Naive thymus-derived CD4-positive, alpha-beta T cell (primary cell): ENCODE measurements at regions of chr17 and their contacts with region 1.

Region 1: GRCh38 chr17:2416010-2416734 is 15.3 kb upstream of the MNT start:
- DNase-seq: peak; percentile 70 to 87 (median 78)
- ATAC-seq: peak; percentile 90
- H3K4me3 ChIP-seq: no peak overlapping the region
- H3K4me3 Mint-ChIP-seq: no peak overlapping the region
- H3K27ac ChIP-seq: no peak overlapping the region
- H3K27ac Mint-ChIP-seq: peak overlapping the region in 7 of 9 donors; percentile 31 to 80 (median 58)
- H3K4me1 ChIP-seq: no peaks in the 10 kb centered on the region
- H3K4me1 Mint-ChIP-seq: peaks cover 0 to 4% (median 0%) of the 10 kb centered on the region in 7 donors
- H3K27me3 ChIP-seq: no peaks in the 10 kb centered on the region
- H3K27me3 Mint-ChIP-seq: no peaks in the 10 kb centered on the region

Region 2: GRCh38 chr17:2303204-2304188 is 112.7 kb before region 1 on chr17 and contains the starts of genes SMG6 and SRR:
- CTCF ChIA-PET with region 1: interaction called, 3 read pairs
- POLR2A ChIA-PET with region 1: no interaction called
- intact Hi-C with region 1: loop called in 1 of 2 experiments (anchors 5 kb)
- DNase-seq: peak; percentile 87 to 95 (median 93)
- ATAC-seq: peak; percentile 97
- H3K4me3 ChIP-seq: peak within 1 kb of the TSS; percentile 87
- H3K4me3 Mint-ChIP-seq: peak within 1 kb of the TSS; percentile 90 to 98 (median 92)
- H3K27ac ChIP-seq: peak within 1 kb of the TSS; percentile 98
- H3K27ac Mint-ChIP-seq: peak within 1 kb of the TSS; percentile 76 to 95 (median 84)
- H3K4me1 ChIP-seq: peaks cover 9 to 13% of the 10 kb centered on the region in 2 donors
- H3K4me1 Mint-ChIP-seq: peaks cover 25 to 61% (median 47%) of the 10 kb centered on the region in 7 donors
- H3K27me3 ChIP-seq: no peaks in the 10 kb centered on the region
- H3K27me3 Mint-ChIP-seq: no peaks in the 10 kb centered on the region
- total RNA-seq, gene SMG6: 45.6 to 65.3 (median 55.8) TPM
- total RNA-seq, gene SRR: 3.1 to 16.0 (median 8.3) TPM

Region 3: DNA sequence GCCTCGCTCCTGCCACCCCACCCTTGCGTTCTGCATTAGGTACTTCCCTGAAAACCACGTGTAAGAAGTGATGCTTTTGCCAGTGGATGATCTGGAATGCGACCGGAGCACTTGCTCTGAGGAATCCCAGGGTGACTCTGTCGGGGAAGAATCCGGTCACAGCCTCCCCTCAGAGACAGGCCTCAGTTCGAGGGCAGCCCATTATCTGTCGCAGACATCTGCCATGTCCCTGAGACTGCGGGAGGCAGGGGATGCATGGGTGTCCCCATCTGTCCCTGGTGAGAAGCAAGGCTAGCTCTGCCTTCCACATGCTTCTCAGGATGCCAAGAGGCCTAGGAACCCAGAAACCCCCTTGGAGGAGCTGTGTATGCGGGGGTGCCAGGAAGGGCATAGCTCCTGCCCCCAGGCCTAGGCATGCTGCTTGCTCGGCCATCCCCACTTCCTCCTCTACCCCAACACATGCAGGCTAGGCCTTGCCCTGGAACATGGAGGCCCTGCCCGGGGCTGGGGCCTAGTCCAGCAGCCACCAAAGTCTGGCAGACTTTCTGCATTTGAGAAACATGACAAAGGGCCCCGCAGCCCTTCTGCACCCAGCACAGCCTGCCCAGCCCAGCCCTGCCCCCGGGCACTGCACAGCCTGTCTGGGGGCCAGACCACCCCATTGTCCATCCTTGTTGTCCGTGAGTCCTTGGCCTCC is 35.8 kb before region 1 on chr17:
- CTCF ChIA-PET with region 1: interaction called, 256 read pairs
- POLR2A ChIA-PET with region 1: interaction called, 50 read pairs
- intact Hi-C with region 1: loop called (anchors 1 kb)
- DNase-seq: no peak
- ATAC-seq: no peak
- H3K4me3 ChIP-seq: no peak overlapping the region
- H3K4me3 Mint-ChIP-seq: no peak overlapping the region
- H3K27ac ChIP-seq: no peak overlapping the region
- H3K27ac Mint-ChIP-seq: peak overlapping the region in 2 of 9 donors; percentile 17 to 43
- H3K4me1 ChIP-seq: peaks cover 0 to 5% of the 10 kb centered on the region in 2 donors
- H3K4me1 Mint-ChIP-seq: peaks cover 0 to 5% (median 0%) of the 10 kb centered on the region in 7 donors
- H3K27me3 ChIP-seq: no peaks in the 10 kb centered on the region
- H3K27me3 Mint-ChIP-seq: no peaks in the 10 kb centered on the region

Region 4: DNA sequence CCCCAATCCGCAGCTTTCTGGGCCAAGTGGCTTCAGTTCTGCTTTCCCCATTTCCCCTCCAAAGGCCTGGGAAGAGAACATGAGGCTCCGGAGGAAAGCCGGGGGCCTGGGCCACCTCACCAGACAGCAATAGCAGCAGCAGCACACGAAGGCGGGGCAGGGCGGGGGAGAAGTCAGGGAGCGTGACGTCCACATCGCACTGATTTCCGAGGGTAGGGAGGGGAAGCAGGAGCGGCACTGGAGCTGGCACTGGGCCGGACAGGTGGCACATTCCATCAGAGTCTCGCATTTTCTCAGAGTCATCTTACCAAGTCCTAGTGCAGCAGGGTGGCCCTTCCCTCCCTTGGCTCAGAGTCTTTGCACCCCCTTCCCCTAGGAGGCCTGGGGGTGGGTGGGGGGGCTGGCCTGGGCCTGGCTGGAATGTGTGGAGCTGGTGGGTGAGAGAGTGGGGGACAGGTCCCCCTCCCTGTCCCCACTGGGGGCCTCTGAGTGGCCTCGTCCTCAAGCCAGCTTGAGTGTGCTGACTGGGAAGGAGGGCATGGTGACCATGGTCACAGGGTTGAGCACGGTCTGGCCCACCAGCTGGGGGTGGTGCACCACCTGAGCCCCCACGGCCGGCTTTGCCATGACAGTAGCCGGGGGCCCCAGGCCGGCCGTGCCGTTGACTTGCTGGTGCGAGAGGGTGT is 29.6 kb before region 1 on chr17:
- CTCF ChIA-PET with region 1: interaction called, 256 read pairs
- POLR2A ChIA-PET with region 1: interaction called, 50 read pairs
- intact Hi-C with region 1: loop called (anchors 1 kb)
- DNase-seq: peak in 1 of 9 donors; percentile 8
- ATAC-seq: no peak
- H3K4me3 ChIP-seq: no peak overlapping the region
- H3K4me3 Mint-ChIP-seq: no peak overlapping the region
- H3K27ac ChIP-seq: no peak overlapping the region
- H3K27ac Mint-ChIP-seq: peak overlapping the region in 1 of 9 donors; percentile 65
- H3K4me1 ChIP-seq: peaks cover 3 to 19% of the 10 kb centered on the region in 2 donors
- H3K4me1 Mint-ChIP-seq: peaks cover 13 to 35% (median 27%) of the 10 kb centered on the region in 7 donors
- H3K27me3 ChIP-seq: no peaks in the 10 kb centered on the region
- H3K27me3 Mint-ChIP-seq: no peaks in the 10 kb centered on the region

Region 5: GRCh38 chr17:2442166-2442565 is 26.0 kb after region 1 on chr17:
- CTCF ChIA-PET with region 1: no interaction called
- POLR2A ChIA-PET with region 1: no interaction called
- intact Hi-C with region 1: no loop called
- DNase-seq: no peak
- ATAC-seq: no peak
- H3K4me3 ChIP-seq: no peak overlapping the region
- H3K4me3 Mint-ChIP-seq: no peak overlapping the region
- H3K27ac ChIP-seq: no peak overlapping the region
- H3K27ac Mint-ChIP-seq: peak overlapping the region in 2 of 9 donors; percentile 1 to 71
- H3K4me1 ChIP-seq: no peaks in the 10 kb centered on the region
- H3K4me1 Mint-ChIP-seq: peaks cover 0 to 8% (median 0%) of the 10 kb centered on the region in 7 donors
- H3K27me3 ChIP-seq: no peaks in the 10 kb centered on the region
- H3K27me3 Mint-ChIP-seq: no peaks in the 10 kb centered on the region